PC-3 (cell line): ENCODE measurements at regions of chr20 and their contacts with region 1.

Region 1: GRCh38 chr20:58388882-58389323 is at the start of gene VAPB:
- DNase-seq: peak; percentile 99
- ATAC-seq: peak; percentile 99
- H3K4me3 ChIP-seq: peak within 1 kb of the TSS; percentile 83
- H3K27ac ChIP-seq: peak within 1 kb of the TSS; percentile 69
- H3K4me1 ChIP-seq: peaks cover 34% of the 10 kb centered on the region
- H3K27me3 ChIP-seq: no peaks in the 10 kb centered on the region
- CTCF ChIP-seq: no peak
- total RNA-seq, gene VAPB: 16.5 and 23.0 TPM in 2 replicates

Region 2: GRCh38 chr20:58309575-58310290 is 79.2 kb before region 1 on chr20 and contains the start of gene RAB22A:
- CTCF ChIA-PET with region 1: interaction called, 6 read pairs
- POLR2A ChIA-PET with region 1: interaction called, 5 read pairs
- intact Hi-C with region 1: loop called (anchors 5 kb)
- DNase-seq: peak; percentile 84
- ATAC-seq: peak; percentile 62
- H3K4me3 ChIP-seq: peak within 1 kb of the TSS; percentile 86
- H3K27ac ChIP-seq: peak within 1 kb of the TSS; percentile 68
- H3K4me1 ChIP-seq: peaks cover 44% of the 10 kb centered on the region
- H3K27me3 ChIP-seq: no peaks in the 10 kb centered on the region
- CTCF ChIP-seq: no peak
- total RNA-seq, gene RAB22A: 47.4 and 55.0 TPM in 2 replicates